ENCODE measurements at regions of chr7 and their contacts with region 1.

Region 1: DNA sequence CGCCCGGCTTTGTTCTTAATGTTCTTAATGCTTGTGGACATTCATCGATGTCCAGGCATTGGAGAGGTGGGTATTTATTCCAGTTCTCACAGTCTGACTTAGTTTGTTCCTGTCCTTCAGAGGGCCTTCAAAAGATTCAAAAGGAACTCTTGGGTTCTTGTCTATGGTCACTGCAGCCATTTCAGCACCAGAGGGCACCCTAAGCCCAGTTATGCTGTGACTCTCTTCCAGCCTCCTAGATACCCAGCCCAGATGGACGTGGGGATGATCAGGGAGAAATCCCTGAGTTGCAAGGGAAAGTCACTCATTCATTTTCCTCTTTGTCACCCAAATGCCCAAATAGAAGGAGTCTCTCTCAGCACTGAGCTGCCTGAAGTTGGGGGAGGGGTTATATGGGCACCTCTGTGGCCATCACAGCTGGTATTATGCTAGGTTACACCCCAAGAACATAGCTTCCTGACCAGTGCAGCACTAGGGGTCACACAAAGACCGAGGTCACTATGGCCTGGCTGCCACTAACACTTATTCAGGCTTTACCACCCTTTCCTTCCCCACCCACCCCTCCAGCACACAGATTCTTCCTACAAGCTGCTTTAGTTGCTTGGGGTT is 26.5 kb upstream of the CCDC126 start:
- DNase-seq: peak; percentile 60
- ATAC-seq: peak; percentile 99
- H3K4me3 ChIP-seq: no peak overlapping the region
- H3K27ac ChIP-seq: no peak overlapping the region
- H3K4me1 ChIP-seq: no peaks in the 10 kb centered on the region
- H3K27me3 ChIP-seq: no peaks in the 10 kb centered on the region
- CTCF ChIP-seq: peak; percentile 76 to 98 (median 90)
- EP300 ChIP-seq: no peak
- POLR2A ChIP-seq: no peak
- RAD21 ChIP-seq: peak; percentile 100

Region 2: DNA sequence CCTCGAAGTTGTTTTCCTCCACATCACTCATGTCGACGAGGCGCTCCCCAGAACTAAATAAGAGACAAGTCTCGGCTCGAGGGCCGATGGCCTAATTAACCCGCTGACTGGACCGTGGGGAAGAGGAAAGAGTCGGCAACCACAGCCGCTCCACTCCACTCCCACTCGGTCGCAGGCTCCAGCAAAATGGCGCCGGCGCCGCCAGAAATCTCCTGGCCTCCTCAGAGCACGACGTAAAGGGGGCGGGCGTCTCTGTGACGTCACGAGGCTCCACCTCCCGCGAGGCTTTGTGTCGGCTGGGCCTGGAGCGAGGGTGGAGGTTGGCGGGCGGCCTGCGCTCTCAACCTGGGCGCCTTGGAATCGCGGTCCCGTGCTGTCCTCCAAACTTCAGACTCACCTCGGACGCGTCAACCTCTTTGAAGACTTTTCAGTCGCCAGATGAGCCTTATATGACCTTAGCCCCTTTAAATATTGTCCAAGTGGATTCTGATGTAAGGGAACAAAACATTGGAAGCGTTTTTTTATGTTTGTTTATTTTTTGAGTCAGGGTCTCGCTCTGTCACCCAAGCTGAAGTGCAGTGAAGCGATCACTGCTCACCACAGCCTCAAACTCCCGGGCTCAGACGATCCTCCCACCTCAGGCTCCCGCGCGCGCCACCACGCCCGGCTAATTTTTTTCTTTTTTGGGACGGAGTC is 38.8 kb before region 1 on chr7 and contains the start of gene TRA2A:
- CTCF ChIA-PET with region 1: no interaction called
- POLR2A ChIA-PET with region 1: no interaction called
- RAD21 ChIA-PET with region 1: no interaction called
- SMC1A ChIA-PET with region 1: no interaction called
- in situ Hi-C with region 1: no loop called
- intact Hi-C with region 1: no loop called
- DNase-seq: peak; percentile 86
- ATAC-seq: peak; percentile 84
- H3K4me3 ChIP-seq: peak within 1 kb of the TSS; percentile 99
- H3K27ac ChIP-seq: peak within 1 kb of the TSS; percentile 99
- H3K4me1 ChIP-seq: 0 out of 2 replicates have a peak, but pooled peaks cover 2% of the 10 kb centered on the region
- H3K27me3 ChIP-seq: no peaks in the 10 kb centered on the region
- CTCF ChIP-seq: no peak
- EP300 ChIP-seq: 0 out of 4 replicates have a peak, but pooled peaks of 1 of the 2 experiments have one; percentile 22
- POLR2A ChIP-seq: peak; percentile 98
- RAD21 ChIP-seq: no peak
- polyA plus RNA-seq, gene TRA2A: 69.2 to 83.1 TPM

Region 3: GRCh38 chr7:23546897-23547572 is 23.7 kb before region 1 on chr7:
- CTCF ChIA-PET with region 1: interaction called, 19 read pairs
- POLR2A ChIA-PET with region 1: interaction called, 4 read pairs
- RAD21 ChIA-PET with region 1: interaction called, 6 read pairs
- SMC1A ChIA-PET with region 1: interaction called, 7 read pairs
- in situ Hi-C with region 1: no loop called
- intact Hi-C with region 1: loop called (anchors 1 kb)
- DNase-seq: peak; percentile 74
- ATAC-seq: peak; percentile 79
- H3K4me3 ChIP-seq: no peak overlapping the region
- H3K27ac ChIP-seq: peak overlapping the region; percentile 18; the same call in 1 of the 2 replicates
- H3K4me1 ChIP-seq: peaks cover 13% of the 10 kb centered on the region
- H3K27me3 ChIP-seq: no peaks in the 10 kb centered on the region
- CTCF ChIP-seq: peak; percentile 83 to 95 (median 93); a peak in 5 of 6 replicates
- EP300 ChIP-seq: no peak
- POLR2A ChIP-seq: no peak
- RAD21 ChIP-seq: peak; percentile 89

Region 4: DNA sequence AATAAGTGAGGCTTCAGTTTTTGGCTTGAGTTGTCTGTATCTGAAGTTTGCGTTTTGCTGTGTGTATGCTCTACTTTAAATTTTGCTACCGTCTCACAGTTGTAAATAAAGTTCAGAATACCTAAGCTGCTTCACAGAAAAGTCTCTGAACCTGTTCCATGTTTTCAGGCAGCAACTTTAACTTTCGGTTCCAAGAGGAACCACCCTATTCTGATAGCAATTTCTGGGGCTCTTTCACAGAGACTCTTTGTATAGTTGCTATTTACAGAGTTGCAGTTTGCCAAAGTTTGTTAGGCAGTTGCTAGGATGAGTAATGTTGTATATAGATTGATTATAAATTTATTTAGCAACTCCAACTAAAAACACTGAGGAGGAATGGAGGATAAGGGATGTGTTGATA is 115.0 kb after region 1 on chr7:
- CTCF ChIA-PET with region 1: interaction called, 19 read pairs
- POLR2A ChIA-PET with region 1: interaction called, 3 read pairs
- RAD21 ChIA-PET with region 1: interaction called, 11 read pairs
- SMC1A ChIA-PET with region 1: interaction called, 3 read pairs
- in situ Hi-C with region 1: no loop called
- intact Hi-C with region 1: no loop called
- DNase-seq: no peak
- ATAC-seq: peak; percentile 54
- H3K4me3 ChIP-seq: no peak overlapping the region
- H3K27ac ChIP-seq: no peak overlapping the region
- H3K4me1 ChIP-seq: no peaks in the 10 kb centered on the region; the same call in 1 of the 2 replicates
- H3K27me3 ChIP-seq: no peaks in the 10 kb centered on the region
- CTCF ChIP-seq: no peak
- EP300 ChIP-seq: no peak
- POLR2A ChIP-seq: no peak
- RAD21 ChIP-seq: no peak

Region 5: DNA sequence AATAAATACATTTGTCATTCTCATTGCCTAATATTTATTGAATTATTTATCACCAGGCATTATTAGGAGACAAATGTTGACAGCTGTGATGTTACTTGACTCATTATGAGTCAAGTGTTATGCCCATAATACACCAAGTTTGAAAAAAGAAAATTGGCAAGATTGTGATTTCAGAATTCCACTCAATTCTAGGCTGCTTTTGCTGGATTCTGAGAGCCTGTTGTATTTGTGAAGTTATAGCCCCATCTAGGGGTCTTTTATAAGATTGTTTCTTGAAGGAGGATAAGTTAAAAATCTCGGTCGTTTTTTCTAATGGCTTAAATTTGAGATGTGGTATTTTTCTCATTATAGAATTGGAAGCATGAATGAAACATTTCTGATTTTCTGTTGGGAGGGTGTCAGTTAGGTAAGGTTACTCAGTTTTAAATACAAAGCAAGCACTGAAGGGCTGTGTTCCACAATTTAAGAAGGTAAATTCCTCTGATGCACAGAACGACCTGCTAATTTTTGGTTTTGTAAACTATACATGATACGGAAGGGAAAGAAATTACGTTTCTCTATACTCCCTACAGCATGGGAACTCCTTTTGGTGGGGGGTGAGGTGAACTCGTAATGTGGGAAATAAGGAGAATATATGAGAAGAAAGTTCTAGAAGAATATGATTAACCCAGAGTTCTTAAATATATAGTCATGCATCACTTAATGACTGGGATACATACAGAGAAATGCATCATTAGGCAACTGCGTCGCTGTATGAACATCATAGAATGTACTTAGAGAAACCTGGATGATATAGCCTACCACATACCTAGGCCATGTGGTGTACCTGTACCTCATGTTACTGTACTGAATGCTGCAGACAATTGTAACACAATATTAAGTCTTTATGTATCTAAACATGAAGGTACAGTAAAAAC is 141.9 kb after region 1 on chr7:
- CTCF ChIA-PET with region 1: interaction called, 264 read pairs
- POLR2A ChIA-PET with region 1: interaction called, 4 read pairs
- RAD21 ChIA-PET with region 1: interaction called, 129 read pairs
- SMC1A ChIA-PET with region 1: interaction called, 170 read pairs
- in situ Hi-C with region 1: loop called (anchors 5 kb)
- intact Hi-C with region 1: loop called (anchors 1 kb)
- DNase-seq: peak; percentile 3
- ATAC-seq: peak; percentile 62
- H3K4me3 ChIP-seq: no peak overlapping the region
- H3K27ac ChIP-seq: no peak overlapping the region
- H3K4me1 ChIP-seq: no peaks in the 10 kb centered on the region
- H3K27me3 ChIP-seq: no peaks in the 10 kb centered on the region
- CTCF ChIP-seq: peak; percentile 22 to 70 (median 27); a peak in 4 of 6 replicates
- EP300 ChIP-seq: no peak
- POLR2A ChIP-seq: no peak
- RAD21 ChIP-seq: peak; percentile 98

Region 6: GRCh38 chr7:23863209-23863798 is 292.6 kb after region 1 on chr7:
- CTCF ChIA-PET with region 1: interaction called, 3 read pairs
- POLR2A ChIA-PET with region 1: no interaction called
- RAD21 ChIA-PET with region 1: no interaction called
- SMC1A ChIA-PET with region 1: interaction called, 3 read pairs
- in situ Hi-C with region 1: no loop called
- intact Hi-C with region 1: loop called (anchors 10 kb)
- DNase-seq: no peak
- ATAC-seq: peak; percentile 55; the same call in 2 of the 3 replicates
- H3K4me3 ChIP-seq: no peak overlapping the region
- H3K27ac ChIP-seq: no peak overlapping the region
- H3K4me1 ChIP-seq: no peaks in the 10 kb centered on the region
- H3K27me3 ChIP-seq: no peaks in the 10 kb centered on the region
- CTCF ChIP-seq: peak; percentile 53 to 63 (median 62)
- EP300 ChIP-seq: no peak
- POLR2A ChIP-seq: no peak
- RAD21 ChIP-seq: peak; percentile 85

Region 7: DNA sequence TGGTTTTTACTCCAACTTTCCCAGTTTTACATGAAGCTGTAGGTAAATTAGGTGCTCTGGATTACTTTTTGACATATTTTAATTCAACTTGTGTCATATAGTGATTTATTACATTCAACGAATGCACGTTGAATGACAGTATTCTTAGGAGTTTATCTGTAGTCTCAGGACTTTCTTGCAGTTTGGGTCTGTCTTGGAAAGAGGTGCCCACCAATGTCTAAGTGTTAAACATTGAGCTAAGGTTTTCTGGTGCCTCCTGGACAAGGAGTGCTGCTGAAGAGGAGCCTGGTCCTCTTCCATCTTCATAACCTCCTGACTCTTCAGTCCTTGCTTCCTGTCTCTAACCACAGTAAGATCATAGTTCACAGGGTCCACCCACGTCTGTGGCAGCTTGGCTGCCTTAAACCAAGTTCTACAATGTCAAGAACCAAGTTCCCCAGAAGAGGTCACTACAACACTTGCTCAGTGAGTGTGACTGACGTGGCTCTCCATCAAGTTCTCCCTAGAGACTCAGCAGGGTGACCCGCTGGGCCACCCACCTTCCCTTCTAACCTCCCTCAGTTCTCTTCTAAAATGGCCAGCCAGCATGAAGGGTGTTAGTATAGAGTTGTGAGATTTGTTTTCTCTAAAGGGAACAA is 719.4 kb after region 1 on chr7:
- CTCF ChIA-PET with region 1: interaction called, 5 read pairs
- POLR2A ChIA-PET with region 1: no interaction called
- RAD21 ChIA-PET with region 1: no interaction called
- SMC1A ChIA-PET with region 1: no interaction called
- in situ Hi-C with region 1: loop called (anchors 10 kb)
- intact Hi-C with region 1: no loop called
- DNase-seq: peak; percentile 70
- ATAC-seq: peak; percentile 99
- H3K4me3 ChIP-seq: no peak overlapping the region
- H3K27ac ChIP-seq: no peak overlapping the region
- H3K4me1 ChIP-seq: 0 out of 2 replicates have a peak, but pooled peaks cover 2% of the 10 kb centered on the region
- H3K27me3 ChIP-seq: peaks cover 7% of the 10 kb centered on the region in 2 experiments
- CTCF ChIP-seq: peak; percentile 63 to 76 (median 71)
- EP300 ChIP-seq: no peak
- POLR2A ChIP-seq: no peak
- RAD21 ChIP-seq: peak; percentile 90

Measured in GM12878 (cell line).